Activated T-helper 1 cell treated with anti-CD3 and anti-CD28 coated beads, Interleukin-12 subunit alpha, Interleukin-12 subunit beta, Interleukin-2, Interleukin-4 antibody, amounts not matched to agents 30 ng/mL and 10 ng/mL and 1 ng/mL, durations not matched to agents 14 hours and 24 hours and 36 hours (primary cell): ENCODE measurements at regions of chr18 and their contacts with region 1.

Region 1: DNA sequence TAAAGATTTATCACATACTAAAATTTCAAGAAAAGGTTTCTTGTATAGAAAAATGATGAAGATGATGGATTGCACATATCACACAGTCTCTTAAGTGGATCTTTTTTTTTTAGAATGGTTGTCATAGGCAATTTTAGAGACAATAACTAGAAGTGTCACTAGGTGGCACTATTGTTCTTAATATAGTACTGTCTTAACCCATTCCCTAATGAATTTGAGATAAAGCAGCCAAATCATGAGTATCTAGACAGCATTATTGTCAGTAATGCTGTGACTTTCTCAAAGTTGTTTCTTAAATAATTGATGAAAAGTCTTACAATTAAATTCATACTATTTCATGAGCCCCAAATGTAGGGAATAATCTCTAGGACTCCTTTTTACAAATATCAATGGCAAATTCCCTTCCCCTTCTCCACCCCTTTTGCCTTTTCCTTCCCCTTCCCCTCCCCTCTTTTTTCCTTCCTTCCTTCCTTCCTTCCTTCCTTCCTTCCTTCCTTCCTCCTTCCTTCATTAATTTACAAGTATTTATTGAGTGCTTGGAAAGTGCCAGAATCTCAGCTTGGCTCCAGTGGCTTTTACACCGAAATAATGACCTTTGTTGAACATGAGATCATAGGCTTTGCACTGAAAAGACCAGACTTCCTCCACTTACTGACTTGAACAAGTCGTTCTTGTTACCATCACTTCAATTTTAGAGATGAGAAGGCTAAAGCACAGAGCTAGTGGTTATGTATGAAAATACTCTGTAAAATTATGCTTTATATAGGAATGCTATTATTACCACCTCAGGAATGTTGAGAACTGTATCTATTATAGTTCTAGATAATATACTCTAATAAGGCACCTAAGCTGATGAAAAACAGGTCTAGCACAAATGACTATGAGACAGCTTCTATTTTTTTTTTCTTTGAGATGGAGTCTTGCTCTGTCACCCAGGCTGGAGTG is 19.8 kb downstream of the MYL12B start:
- DNase-seq: no peak
- H3K4me3 Mint-ChIP-seq: no peak overlapping the region
- H3K27ac Mint-ChIP-seq: no peak overlapping the region
- H3K4me1 Mint-ChIP-seq: peaks cover 5% of the 10 kb centered on the region
- H3K27me3 Mint-ChIP-seq: peaks cover 2% of the 10 kb centered on the region

Region 2: GRCh38 chr18:3297025-3297984 is 15.6 kb after region 1 on chr18:
- intact Hi-C with region 1: loop called (anchors 1 kb)
- DNase-seq: peak; percentile 89
- H3K4me3 Mint-ChIP-seq: peak overlapping the region; percentile 91
- H3K27ac Mint-ChIP-seq: peak overlapping the region; percentile 82
- H3K4me1 Mint-ChIP-seq: peaks cover 15% of the 10 kb centered on the region
- H3K27me3 Mint-ChIP-seq: peaks cover 33% of the 10 kb centered on the region

Region 3: GRCh38 chr18:3454365-3455089 is 172.8 kb after region 1 on chr18:
- intact Hi-C with region 1: loop called (anchors 1 kb)
- DNase-seq: no peak
- H3K4me3 Mint-ChIP-seq: peak overlapping the region; percentile 90
- H3K27ac Mint-ChIP-seq: peak overlapping the region; percentile 99
- H3K4me1 Mint-ChIP-seq: peaks cover 71% of the 10 kb centered on the region
- H3K27me3 Mint-ChIP-seq: peaks cover 2% of the 10 kb centered on the region

Region 4: GRCh38 chr18:3771121-3771971 is 489.6 kb after region 1 on chr18:
- intact Hi-C with region 1: loop called (anchors 5 kb)
- DNase-seq: peak; percentile 73
- H3K4me3 Mint-ChIP-seq: peak overlapping the region; percentile 57
- H3K27ac Mint-ChIP-seq: no peak overlapping the region
- H3K4me1 Mint-ChIP-seq: peaks cover 14% of the 10 kb centered on the region
- H3K27me3 Mint-ChIP-seq: peaks cover 34% of the 10 kb centered on the region

Region 5: DNA sequence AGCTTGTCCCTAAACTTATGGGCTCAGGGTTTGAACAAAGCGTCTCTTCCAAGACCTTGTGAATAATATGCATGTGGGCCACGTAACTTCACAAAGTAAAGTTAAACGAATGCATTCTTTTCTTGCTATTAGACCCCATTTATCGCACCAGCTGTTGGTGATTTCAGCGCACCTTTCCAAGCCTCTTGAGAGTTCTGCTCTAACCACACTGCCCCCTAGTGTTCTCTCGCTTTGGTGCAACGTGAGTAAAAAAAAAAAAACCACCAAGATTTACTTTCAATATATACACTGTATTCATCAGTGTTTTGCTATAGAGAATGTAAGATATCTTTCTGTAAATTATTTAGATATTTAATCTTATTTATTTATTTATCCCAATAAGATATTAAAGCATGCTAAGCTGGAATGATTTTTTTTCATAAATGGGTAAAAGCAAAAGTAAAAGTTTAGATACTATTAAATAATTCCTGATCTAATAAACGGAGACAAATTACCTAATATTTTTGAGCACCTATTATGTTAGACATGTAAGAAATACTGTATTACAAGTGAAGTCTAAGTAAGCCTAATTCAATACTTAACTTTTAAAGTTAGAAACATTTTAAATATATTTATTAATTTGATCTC is 713.9 kb after region 1 on chr18:
- intact Hi-C with region 1: loop called (anchors 1 kb)
- DNase-seq: peak; percentile 52
- H3K4me3 Mint-ChIP-seq: no peak overlapping the region
- H3K27ac Mint-ChIP-seq: no peak overlapping the region
- H3K4me1 Mint-ChIP-seq: no peaks in the 10 kb centered on the region
- H3K27me3 Mint-ChIP-seq: peaks cover 9% of the 10 kb centered on the region